Activated B cell treated with CpG ODN at 0.5 μM for 24 hours (primary cell): ENCODE measurements at regions of chr10 and their contacts with region 1.

Region 1: GRCh38 chr10:72088889-72089575 is 681 bp upstream of the SPOCK2 start:
- DNase-seq: peak; percentile 29
- ATAC-seq: peak; percentile 27
- H3K4me3 Mint-ChIP-seq: peak overlapping the region; percentile 99
- H3K27ac Mint-ChIP-seq: peak overlapping the region; percentile 97
- H3K4me1 Mint-ChIP-seq: peaks cover 39% of the 10 kb centered on the region
- H3K27me3 Mint-ChIP-seq: no peaks in the 10 kb centered on the region
- CTCF ChIP-seq: no peak

Region 2: GRCh38 chr10:71927776-71928592 is 161.0 kb before region 1 on chr10:
- CTCF ChIA-PET with region 1: no interaction called
- POLR2A ChIA-PET with region 1: no interaction called
- intact Hi-C with region 1: no loop called
- DNase-seq: no peak
- ATAC-seq: no peak
- H3K4me3 Mint-ChIP-seq: no peak overlapping the region
- H3K27ac Mint-ChIP-seq: no peak overlapping the region
- H3K4me1 Mint-ChIP-seq: no peaks in the 10 kb centered on the region
- H3K27me3 Mint-ChIP-seq: peaks cover under 1% of the 10 kb centered on the region
- CTCF ChIP-seq: no peak

Region 3: DNA sequence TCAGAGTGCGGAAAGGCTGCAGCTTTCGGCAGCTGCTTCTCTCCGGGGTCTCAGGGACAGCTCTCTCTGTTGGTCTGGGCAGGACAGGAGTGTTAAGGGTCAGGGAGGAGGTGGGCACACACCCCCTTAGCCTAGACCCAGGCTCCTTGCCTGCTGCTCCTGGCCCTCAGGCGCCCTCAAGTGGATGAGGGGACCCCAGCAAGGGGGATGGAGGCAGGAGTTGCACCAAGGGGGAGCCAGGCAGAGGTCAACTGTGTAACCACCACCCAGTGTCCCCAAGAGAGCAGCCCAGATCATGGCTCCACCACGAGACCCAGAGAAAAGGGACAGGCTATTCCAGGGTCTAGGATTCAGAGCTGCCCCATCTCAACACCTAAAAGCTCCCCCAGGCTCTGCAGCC is 27.5 kb before region 1 on chr10:
- CTCF ChIA-PET with region 1: no interaction called
- POLR2A ChIA-PET with region 1: interaction called, 18 read pairs
- intact Hi-C with region 1: no loop called
- DNase-seq: no peak
- ATAC-seq: no peak
- H3K4me3 Mint-ChIP-seq: no peak overlapping the region
- H3K27ac Mint-ChIP-seq: peak overlapping the region; percentile 35
- H3K4me1 Mint-ChIP-seq: peaks cover 17% of the 10 kb centered on the region
- H3K27me3 Mint-ChIP-seq: no peaks in the 10 kb centered on the region
- CTCF ChIP-seq: no peak

Region 4: DNA sequence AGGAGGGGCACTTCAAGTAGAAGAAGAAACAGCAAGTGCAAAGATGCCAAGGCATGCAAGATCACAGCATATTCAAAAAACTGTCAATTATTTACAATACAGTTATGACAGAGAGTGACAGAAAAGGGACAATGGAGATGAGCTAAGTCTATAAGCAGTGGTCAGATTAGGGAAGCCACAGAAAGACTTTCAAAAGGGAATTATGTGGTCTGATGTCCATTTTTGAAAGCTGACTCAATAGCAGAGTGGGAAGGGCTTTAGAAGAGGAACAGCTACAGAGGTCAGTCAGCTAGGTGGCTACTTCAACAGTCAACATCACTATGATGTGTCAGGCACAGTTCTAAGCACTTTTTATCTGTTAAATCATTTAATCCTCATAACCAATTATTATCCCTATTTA is 44.5 kb after region 1 on chr10:
- CTCF ChIA-PET with region 1: no interaction called
- POLR2A ChIA-PET with region 1: interaction called, 12 read pairs
- intact Hi-C with region 1: no loop called
- DNase-seq: no peak
- ATAC-seq: no peak
- H3K4me3 Mint-ChIP-seq: no peak overlapping the region
- H3K27ac Mint-ChIP-seq: peak overlapping the region; percentile 6
- H3K4me1 Mint-ChIP-seq: peaks cover 33% of the 10 kb centered on the region
- H3K27me3 Mint-ChIP-seq: no peaks in the 10 kb centered on the region
- CTCF ChIP-seq: no peak

Region 5: DNA sequence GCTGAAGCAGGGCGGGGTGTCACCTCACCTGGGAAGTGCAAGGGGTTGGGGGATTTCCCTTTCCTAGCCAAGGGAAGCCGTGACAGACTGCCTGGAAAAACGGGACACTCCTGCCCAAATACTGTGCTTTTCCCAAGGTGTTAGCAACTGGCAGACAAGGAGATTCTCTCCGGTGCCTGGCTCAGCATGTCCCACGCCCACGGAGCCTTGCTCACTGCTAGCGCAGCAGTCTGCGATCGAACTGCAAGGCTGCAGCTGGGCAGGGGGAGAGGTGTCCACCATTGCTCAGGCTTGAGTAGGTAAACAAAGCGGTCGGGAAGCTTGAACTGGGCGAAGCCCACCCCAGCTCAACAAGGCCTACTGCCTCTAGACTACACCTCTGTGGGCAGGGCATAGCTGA is 346.5 kb after region 1 on chr10:
- CTCF ChIA-PET with region 1: no interaction called
- POLR2A ChIA-PET with region 1: no interaction called
- intact Hi-C with region 1: no loop called
- DNase-seq: no peak
- ATAC-seq: no peak
- H3K4me3 Mint-ChIP-seq: no peak overlapping the region
- H3K27ac Mint-ChIP-seq: no peak overlapping the region
- H3K4me1 Mint-ChIP-seq: peaks cover 1% of the 10 kb centered on the region
- H3K27me3 Mint-ChIP-seq: no peaks in the 10 kb centered on the region
- CTCF ChIP-seq: no peak